ENCODE measurements at regions of chr7 and their contacts with region 1.

Region 1: DNA sequence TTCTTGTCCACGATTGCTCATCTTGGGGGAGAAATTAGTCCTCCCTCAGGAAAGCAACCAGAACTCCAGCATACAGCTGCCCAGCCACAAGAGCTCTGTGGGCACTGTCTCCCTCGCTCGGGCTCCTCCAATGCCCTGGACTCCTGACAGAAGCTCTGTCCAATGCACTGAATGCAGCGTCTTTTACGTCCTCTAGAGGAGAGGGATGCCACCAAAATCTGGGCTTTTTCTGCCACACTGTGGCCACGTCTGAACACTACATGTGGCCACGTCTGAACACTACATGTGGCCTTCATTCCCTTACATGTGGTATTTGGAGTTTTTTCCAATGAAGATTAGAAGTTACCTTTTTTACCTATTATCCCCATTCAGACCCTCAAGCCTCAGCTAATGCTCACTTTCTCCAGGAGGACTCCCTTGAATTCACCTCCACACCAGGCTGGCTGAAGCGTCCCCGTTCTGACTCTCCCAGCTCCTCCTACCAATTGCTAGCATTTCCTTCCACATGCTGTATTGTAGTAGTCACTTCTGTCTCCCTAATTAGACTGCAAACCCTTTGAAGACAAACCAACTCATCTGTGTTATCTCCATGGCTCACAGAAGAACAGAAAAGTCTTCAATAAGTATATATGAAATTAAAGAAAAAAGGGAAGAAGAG is 134.3 kb upstream of the PDE1C start:
- DNase-seq: peak in 2 of 3 donors; percentile 44 to 54
- ATAC-seq: peak; percentile 81
- H3K4me3 ChIP-seq: no peak overlapping the region
- H3K4me1 ChIP-seq: no peaks in the 10 kb centered on the region
- CTCF ChIP-seq: peak; percentile 31

Region 2: GRCh38 chr7:31744294-31744874 is 460.1 kb before region 1 on chr7:
- intact Hi-C with region 1: loop called (anchors 2 to 5 kb)
- DNase-seq: peak in 2 of 3 donors; percentile 59 to 82
- ATAC-seq: peak; percentile 72
- H3K4me3 ChIP-seq: no peak overlapping the region
- H3K4me1 ChIP-seq: no peaks in the 10 kb centered on the region
- CTCF ChIP-seq: peak; percentile 75

Region 3: DNA sequence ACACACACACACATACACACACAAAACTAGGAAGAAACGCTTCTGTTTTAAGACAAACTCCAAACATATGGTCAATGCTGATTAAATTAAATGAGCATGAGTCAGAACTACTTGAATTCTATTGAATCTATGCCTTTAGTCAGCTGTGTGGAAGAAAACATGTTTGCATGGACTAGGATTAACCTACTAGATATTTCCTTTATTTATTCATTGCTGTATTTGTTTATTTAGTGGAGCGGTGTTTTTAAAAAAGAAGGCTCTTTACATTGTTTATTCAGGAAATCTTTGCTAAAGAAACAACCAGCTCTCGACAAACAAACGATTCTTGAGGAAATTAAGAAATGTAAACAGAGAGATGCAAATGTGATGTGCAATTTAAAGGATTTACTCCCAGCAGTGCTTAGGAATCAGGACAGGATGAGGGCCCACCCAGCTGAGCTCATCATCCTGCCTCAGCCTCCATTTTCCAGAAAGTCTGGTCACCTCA is 217.5 kb before region 1 on chr7:
- intact Hi-C with region 1: no loop called
- DNase-seq: no peak
- ATAC-seq: no peak
- H3K4me3 ChIP-seq: no peak overlapping the region
- H3K4me1 ChIP-seq: no peaks in the 10 kb centered on the region
- CTCF ChIP-seq: no peak

Region 4: DNA sequence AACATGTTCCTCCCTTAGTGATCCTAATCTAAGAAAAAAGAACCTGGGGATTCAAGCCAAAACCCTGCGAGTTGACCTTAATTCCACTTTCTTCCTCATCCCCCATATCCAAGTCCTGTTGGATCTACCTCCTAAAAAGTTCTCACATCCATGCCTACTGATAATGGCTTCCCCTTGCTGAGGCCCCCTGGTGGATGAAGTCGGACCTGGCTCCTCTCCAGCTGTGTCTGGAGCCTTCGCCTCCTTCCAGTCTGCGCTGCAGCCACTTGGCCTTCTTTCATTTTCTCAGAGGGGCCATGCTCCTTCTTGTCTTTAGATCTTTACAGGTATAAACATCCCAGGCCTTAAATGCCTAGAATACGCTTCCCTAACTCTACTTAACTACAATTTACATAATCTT is 142.3 kb before region 1 on chr7:
- intact Hi-C with region 1: no loop called
- DNase-seq: peak in 2 of 3 donors; percentile 73 to 77
- ATAC-seq: peak; percentile 61
- H3K4me3 ChIP-seq: no peak overlapping the region
- H3K4me1 ChIP-seq: peaks cover 7% of the 10 kb centered on the region
- CTCF ChIP-seq: peak; percentile 14

Region 5: GRCh38 chr7:32275216-32275979 is 70.9 kb after region 1 on chr7:
- intact Hi-C with region 1: no loop called
- DNase-seq: no peak
- ATAC-seq: no peak
- H3K4me3 ChIP-seq: no peak overlapping the region
- H3K4me1 ChIP-seq: no peaks in the 10 kb centered on the region
- CTCF ChIP-seq: no peak